Activated CD4-positive, alpha-beta T cell treated with anti-CD3 and anti-CD28 coated beads, Interleukin-2, amount 10 ng/mL, durations not matched to agents 24 days and 14 days (primary cell): ENCODE measurements at regions of chr6 and their contacts with region 1.

Region 1: DNA sequence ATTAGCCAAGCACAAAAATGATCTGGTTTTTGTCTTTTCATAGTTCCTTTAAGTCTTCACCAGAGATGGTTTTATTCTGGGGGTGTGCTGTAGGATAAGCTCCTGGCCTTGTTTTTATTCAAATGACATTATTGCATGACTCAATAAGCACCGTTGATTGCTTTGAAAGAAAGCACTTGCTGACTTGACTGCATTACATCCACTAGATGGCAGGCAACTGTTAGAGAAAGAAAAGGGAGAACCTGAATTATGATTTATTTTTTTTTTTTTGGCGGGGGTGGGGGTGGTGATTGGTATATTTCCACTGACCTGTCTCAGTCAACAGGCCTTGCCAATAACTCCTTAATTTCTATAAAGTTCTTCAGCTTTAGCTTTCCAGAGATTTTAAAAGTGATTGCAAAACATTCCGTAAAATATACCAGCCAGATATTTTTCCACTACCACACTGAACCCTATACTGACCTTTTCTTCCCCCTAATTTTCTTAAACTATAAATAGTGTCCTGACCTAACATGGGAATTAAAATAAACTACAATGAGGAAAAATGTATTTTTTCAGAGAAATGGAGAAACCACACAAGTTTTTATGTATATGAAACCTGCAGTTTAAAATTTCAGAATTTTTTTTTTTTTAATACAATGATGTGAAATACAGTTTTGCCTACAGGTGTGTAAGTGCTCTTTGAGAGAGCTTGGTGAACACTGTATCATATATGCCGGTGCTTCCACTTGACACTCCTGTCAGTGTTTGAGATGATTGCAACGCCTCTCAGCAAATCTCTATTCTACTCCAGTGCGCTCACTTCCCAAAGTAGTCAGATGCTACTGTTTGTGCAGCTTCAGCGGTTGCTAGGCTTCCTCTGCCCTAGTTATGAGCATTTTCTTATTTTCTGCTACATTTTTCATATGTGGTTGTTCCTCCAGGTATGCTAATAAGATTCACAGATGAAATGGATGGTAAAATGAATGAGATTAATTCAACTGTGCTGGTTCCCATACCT is 274.3 kb downstream of the CD109 start:
- DNase-seq: no peak
- H3K4me3 Mint-ChIP-seq: no peak overlapping the region
- H3K27ac Mint-ChIP-seq: no peak overlapping the region
- H3K4me1 Mint-ChIP-seq: no peaks in the 10 kb centered on the region
- H3K27me3 Mint-ChIP-seq: no peaks in the 10 kb centered on the region

Region 2: GRCh38 chr6:73739096-73739495 is 231.2 kb before region 1 on chr6:
- intact Hi-C with region 1: loop called (anchors 5 kb)
- DNase-seq: peak; percentile 73
- H3K4me3 Mint-ChIP-seq: no peak overlapping the region
- H3K27ac Mint-ChIP-seq: no peak overlapping the region
- H3K4me1 Mint-ChIP-seq: peaks cover 5% of the 10 kb centered on the region
- H3K27me3 Mint-ChIP-seq: no peaks in the 10 kb centered on the region

Region 3: DNA sequence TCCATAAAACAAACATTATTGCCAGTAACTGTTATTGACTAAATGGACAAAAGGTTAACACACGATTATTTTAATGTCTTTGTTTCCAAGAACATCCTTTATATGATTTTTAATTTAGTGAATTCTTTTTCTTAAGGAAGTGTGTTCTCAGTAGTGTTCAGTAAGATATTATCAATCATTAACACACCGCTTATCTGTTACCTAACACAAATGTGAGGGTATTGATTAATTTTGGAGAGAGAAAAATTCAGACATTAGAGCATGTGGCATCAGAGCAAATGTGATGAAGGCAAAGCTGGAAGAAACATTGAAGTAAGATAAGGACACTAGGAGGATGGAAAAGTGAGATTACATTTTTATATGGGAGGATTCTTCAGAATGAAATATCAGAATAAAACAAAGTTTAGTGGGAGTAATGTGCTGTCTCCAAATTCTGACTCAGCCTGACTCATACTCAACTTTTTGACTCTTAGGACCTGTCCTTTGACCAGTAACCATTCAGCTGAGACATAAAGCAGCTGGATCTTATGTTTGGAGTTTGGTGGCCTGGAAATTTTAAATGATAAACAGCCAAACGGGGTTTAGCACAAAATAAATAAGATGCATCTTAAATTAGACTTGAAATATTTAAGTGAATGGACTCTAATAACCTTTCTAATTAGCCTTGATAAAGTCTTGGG is 74.3 kb after region 1 on chr6:
- intact Hi-C with region 1: no loop called
- DNase-seq: no peak
- H3K4me3 Mint-ChIP-seq: no peak overlapping the region
- H3K27ac Mint-ChIP-seq: no peak overlapping the region
- H3K4me1 Mint-ChIP-seq: no peaks in the 10 kb centered on the region
- H3K27me3 Mint-ChIP-seq: no peaks in the 10 kb centered on the region